Breast epithelium (tissue), 4 donors: ENCODE measurements at regions of chr5 and their contacts with region 1.

Region 1: GRCh38 chr5:145205546-145205945 is 629.6 kb downstream of the PRELID2 start:
- DNase-seq: no peak
- H3K4me3 ChIP-seq: no peak overlapping the region
- H3K27ac ChIP-seq: no peak overlapping the region
- H3K4me1 ChIP-seq: no peaks in the 10 kb centered on the region
- H3K27me3 ChIP-seq: no peaks in the 10 kb centered on the region
- CTCF ChIP-seq: no peak
- POLR2A ChIP-seq: no peak

Region 2: GRCh38 chr5:145110834-145111233 is 94.7 kb before region 1 on chr5:
- intact Hi-C with region 1: no loop called
- DNase-seq: no peak
- H3K4me3 ChIP-seq: no peak overlapping the region
- H3K27ac ChIP-seq: no peak overlapping the region
- H3K4me1 ChIP-seq: no peaks in the 10 kb centered on the region
- H3K27me3 ChIP-seq: no peaks in the 10 kb centered on the region
- CTCF ChIP-seq: no peak
- POLR2A ChIP-seq: no peak

Region 3: GRCh38 chr5:145222622-145223021 is 17.1 kb after region 1 on chr5:
- intact Hi-C with region 1: loop called (anchors 1 kb)
- DNase-seq: no peak
- H3K4me3 ChIP-seq: no peak overlapping the region
- H3K27ac ChIP-seq: no peak overlapping the region
- H3K4me1 ChIP-seq: no peaks in the 10 kb centered on the region
- H3K27me3 ChIP-seq: no peaks in the 10 kb centered on the region
- CTCF ChIP-seq: no peak
- POLR2A ChIP-seq: no peak